Activated T-helper 2 cell treated with anti-CD3 and anti-CD28 coated beads, Interferon-gamma antibody, Interleukin-2, Interleukin-4, amounts not matched to agents 10 μg/mL and 5 μg/mL and 100 μg/mL, durations not matched to agents 14 hours and 24 hours and 36 hours (primary cell): ENCODE measurements at regions of chr20 and their contacts with region 1.

Region 1: GRCh38 chr20:45752746-45753145 is 30.6 kb downstream of the SPINT4 start:
- DNase-seq: no peak
- H3K4me3 Mint-ChIP-seq: no peak overlapping the region
- H3K27ac Mint-ChIP-seq: peak overlapping the region; percentile 41
- H3K4me1 Mint-ChIP-seq: peaks cover 16% of the 10 kb centered on the region
- H3K27me3 Mint-ChIP-seq: peaks cover 37% of the 10 kb centered on the region

Region 2: DNA sequence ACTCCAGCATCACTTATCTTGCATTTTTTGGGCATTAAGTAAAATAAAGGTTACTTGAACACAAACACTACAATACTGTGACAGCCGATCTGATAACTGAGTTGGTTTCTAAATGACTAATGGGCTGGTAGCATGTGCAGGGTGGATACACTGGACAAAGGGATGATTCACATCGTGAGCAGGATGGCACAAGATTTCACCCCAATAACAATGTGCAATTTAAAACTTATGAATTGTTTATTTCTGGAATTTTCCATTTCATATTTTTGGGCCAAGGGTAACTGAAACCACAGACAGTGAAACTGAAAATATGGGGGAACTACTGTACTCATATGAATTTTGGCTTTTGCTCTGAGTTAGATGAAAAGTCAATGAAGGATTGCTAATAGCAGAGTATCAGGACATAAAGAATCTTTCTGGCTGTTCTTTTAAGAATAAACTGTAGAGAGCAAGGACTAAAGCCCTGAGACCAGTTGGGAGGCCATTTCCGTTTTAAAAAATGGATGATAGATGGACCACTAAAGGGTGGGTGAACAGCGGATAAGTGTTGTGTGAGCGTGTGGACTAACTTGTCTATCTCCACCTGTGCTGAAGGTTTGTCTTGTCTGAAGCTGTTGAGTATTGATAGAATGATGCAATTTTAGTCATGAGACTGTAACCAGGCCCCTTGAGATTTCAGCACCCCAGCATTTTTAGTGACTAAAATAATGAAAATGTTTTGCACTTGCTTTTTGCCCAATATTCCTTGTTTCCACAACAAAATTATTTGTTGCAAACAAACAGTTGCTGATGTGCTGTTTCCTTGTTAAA is 245.5 kb before region 1 on chr20:
- intact Hi-C with region 1: loop called (anchors 2 kb)
- DNase-seq: no peak
- H3K4me3 Mint-ChIP-seq: no peak overlapping the region
- H3K27ac Mint-ChIP-seq: no peak overlapping the region
- H3K4me1 Mint-ChIP-seq: peaks cover 14% of the 10 kb centered on the region
- H3K27me3 Mint-ChIP-seq: peaks cover 27% of the 10 kb centered on the region

Region 3: DNA sequence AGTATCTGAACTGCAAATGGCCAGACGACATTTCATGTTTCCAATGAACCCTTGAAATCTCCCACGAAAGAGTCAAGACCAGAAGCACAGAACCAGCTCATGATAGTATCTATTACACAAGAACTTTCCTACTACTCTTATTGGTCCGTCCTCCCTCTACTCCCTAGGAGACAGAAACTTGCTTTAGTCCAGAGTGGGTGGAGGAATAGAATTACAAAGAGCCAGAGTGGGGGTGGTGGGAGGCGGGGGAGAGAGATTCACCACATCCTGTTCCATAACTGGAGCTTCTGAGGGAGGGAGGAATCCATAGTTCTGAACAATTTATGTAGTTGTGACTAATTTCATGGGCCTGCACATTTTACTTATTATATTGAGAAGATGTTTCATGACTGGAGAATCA is 141.7 kb before region 1 on chr20:
- intact Hi-C with region 1: loop called (anchors 1 kb)
- DNase-seq: no peak
- H3K4me3 Mint-ChIP-seq: no peak overlapping the region
- H3K27ac Mint-ChIP-seq: peak overlapping the region; percentile 21
- H3K4me1 Mint-ChIP-seq: peaks cover 27% of the 10 kb centered on the region
- H3K27me3 Mint-ChIP-seq: peaks cover 6% of the 10 kb centered on the region

Region 4: DNA sequence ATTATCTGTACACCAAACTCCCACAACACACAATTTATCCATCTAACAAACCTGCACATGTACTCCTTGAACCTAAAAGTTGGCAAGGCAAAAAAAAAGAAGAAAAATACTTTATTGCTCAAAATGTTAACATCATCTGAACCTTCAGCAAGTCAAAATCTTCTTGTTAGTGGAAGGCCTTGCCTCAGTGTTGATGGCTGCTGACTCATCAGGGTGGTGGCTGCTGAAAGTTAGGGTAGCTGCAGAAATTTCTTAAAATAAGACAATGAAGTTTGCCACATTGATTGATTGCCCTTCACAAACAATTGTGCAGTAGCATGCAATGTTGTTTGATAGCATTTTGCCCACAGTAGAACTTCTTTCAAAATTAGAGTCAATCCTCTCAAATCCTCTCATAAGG is 80.0 kb before region 1 on chr20:
- intact Hi-C with region 1: no loop called
- DNase-seq: no peak
- H3K4me3 Mint-ChIP-seq: no peak overlapping the region
- H3K27ac Mint-ChIP-seq: no peak overlapping the region
- H3K4me1 Mint-ChIP-seq: no peaks in the 10 kb centered on the region
- H3K27me3 Mint-ChIP-seq: peaks cover 6% of the 10 kb centered on the region